HepG2 (cell line): ENCODE measurements at regions of chr2 and their contacts with region 1.

Region 1: DNA sequence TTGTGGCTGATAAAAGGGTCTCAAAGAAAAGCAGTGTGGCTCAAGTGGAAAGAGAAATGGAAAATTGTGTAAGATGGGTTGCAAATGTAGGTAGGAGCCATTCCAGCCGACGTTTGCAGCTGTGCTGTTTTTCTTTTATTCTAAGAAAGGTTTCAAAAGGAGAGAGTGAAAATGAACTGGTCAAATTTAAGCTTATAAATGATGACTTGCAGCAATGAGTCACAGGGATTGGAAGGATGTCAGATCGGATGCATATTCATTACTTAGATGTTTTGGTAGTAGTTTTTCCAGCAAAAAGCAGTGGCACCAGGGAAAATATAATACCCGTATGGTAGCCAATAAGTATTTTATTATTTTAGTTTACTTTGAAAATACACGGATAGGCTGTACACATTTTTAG is 79.1 kb downstream of the LRRTM4 start:
- DNase-seq: no peak
- ATAC-seq: no peak
- H3K4me3 ChIP-seq: no peak overlapping the region
- H3K27ac ChIP-seq: no peak overlapping the region
- H3K4me1 ChIP-seq: no peaks in the 10 kb centered on the region
- H3K27me3 ChIP-seq: no peaks in the 10 kb centered on the region
- CTCF ChIP-seq: no peak
- EP300 ChIP-seq: no peak
- POLR2A ChIP-seq: no peak
- RAD21 ChIP-seq: no peak

Region 2: DNA sequence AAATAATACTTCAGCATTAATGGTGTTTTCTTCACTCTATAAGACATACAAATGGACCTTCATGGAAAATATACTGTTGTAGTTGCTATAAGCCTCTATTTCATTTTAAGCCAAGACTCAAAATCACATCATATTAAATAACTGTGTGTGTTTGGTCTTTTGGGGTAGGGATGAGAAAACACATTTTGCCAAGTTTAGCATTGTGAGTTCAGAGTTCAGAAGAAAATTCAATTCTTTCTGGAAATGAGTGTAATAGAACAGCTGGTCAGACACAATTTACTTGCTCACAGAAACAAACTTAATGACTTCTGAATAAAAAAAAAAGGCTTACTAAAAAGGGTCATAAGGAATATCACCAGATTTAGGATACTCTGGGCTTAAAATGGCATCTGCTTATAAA is 70.4 kb before region 1 on chr2:
- CTCF ChIA-PET with region 1: no interaction called
- POLR2A ChIA-PET with region 1: no interaction called
- in situ Hi-C with region 1: no loop called
- intact Hi-C with region 1: no loop called
- DNase-seq: no peak
- ATAC-seq: no peak
- H3K4me3 ChIP-seq: no peak overlapping the region
- H3K27ac ChIP-seq: no peak overlapping the region
- H3K4me1 ChIP-seq: no peaks in the 10 kb centered on the region
- H3K27me3 ChIP-seq: no peaks in the 10 kb centered on the region
- CTCF ChIP-seq: no peak
- EP300 ChIP-seq: no peak
- POLR2A ChIP-seq: no peak
- RAD21 ChIP-seq: no peak

Region 3: DNA sequence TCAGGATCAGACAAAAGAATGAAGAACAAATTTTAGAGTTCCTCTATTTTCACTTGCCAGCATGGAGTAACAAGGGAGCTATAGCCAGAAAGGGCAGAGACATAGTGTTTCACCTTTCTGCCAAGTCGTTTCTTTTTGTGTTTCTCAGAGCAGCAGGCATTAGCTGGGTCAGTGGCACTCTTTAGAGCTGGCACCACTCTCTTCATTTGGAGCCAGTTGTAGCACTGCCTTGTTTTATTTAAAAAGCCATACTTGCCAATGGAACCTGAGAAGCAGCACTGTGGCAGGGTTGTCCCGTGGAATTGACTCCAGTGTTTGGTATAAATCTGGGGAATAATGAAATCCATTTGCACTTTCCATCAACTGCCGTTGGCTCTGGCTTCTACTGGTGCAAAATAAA is 15.1 kb after region 1 on chr2:
- CTCF ChIA-PET with region 1: no interaction called
- POLR2A ChIA-PET with region 1: no interaction called
- in situ Hi-C with region 1: no loop called
- intact Hi-C with region 1: loop called (anchors 1 kb)
- DNase-seq: no peak
- ATAC-seq: no peak
- H3K4me3 ChIP-seq: no peak overlapping the region
- H3K27ac ChIP-seq: no peak overlapping the region
- H3K4me1 ChIP-seq: no peaks in the 10 kb centered on the region
- H3K27me3 ChIP-seq: no peaks in the 10 kb centered on the region
- CTCF ChIP-seq: no peak
- EP300 ChIP-seq: no peak
- POLR2A ChIP-seq: no peak
- RAD21 ChIP-seq: no peak